ENCODE measurements at regions of chr5 and their contacts with region 1.

Region 1: GRCh38 chr5:67549296-67549618 is 352.7 kb upstream of the CD180 start:
- DNase-seq: no peak
- ATAC-seq: no peak
- H3K4me3 ChIP-seq: no peak overlapping the region
- H3K4me3 Mint-ChIP-seq: no peak overlapping the region
- H3K27ac ChIP-seq: no peak overlapping the region
- H3K27ac Mint-ChIP-seq: no peak overlapping the region
- H3K4me1 ChIP-seq: no peaks in the 10 kb centered on the region
- H3K4me1 Mint-ChIP-seq: peaks cover 9 to 11% of the 10 kb centered on the region in 2 donors
- H3K27me3 ChIP-seq: no peaks in the 10 kb centered on the region
- H3K27me3 Mint-ChIP-seq: no peaks in the 10 kb centered on the region
- CTCF ChIP-seq: no peak

Region 2: DNA sequence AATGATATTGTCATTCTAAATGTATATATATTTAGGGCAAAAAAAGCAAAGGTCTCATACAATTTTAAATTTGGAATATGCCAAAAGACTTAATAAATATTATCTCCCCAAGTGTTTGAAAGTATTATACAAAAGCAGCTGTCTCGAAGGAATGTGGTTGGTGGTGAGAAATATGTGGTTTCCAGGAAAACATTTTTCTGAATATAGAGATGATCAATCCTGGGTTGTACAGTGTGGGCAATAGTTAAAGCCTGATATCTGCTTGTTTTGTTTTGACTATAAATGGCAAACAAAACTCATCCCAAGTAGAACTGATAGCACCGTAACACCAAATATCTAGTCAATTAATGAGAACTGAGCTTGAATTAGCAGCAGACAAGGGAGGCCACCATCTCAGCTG is 39.1 kb after region 1 on chr5:
- intact Hi-C with region 1: loop called (anchors 5 kb)
- DNase-seq: no peak
- ATAC-seq: no peak
- H3K4me3 ChIP-seq: no peak overlapping the region
- H3K4me3 Mint-ChIP-seq: no peak overlapping the region
- H3K27ac ChIP-seq: no peak overlapping the region
- H3K27ac Mint-ChIP-seq: no peak overlapping the region
- H3K4me1 ChIP-seq: no peaks in the 10 kb centered on the region
- H3K4me1 Mint-ChIP-seq: peaks cover 5 to 12% of the 10 kb centered on the region in 2 donors
- H3K27me3 ChIP-seq: no peaks in the 10 kb centered on the region
- H3K27me3 Mint-ChIP-seq: peaks cover 0 to 2% of the 10 kb centered on the region in 2 donors
- CTCF ChIP-seq: no peak

Region 3: DNA sequence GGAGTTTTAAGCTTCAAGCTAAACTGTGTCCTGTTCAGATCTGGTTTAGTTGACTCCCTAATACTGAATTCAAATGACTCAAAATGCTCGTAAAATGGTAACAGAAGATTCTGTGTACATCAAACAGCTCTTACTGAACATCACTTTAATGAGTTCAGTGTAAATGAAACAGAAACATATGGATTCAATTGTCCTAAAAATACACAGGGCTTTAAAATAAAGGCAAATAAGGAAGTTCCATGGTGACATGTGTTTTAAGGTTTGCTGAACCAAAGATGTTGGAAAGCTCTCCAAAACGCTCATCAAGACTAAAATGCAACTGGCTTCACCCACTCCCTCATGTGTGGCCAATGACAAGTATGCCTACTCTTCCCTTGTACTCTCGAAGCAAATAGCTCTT is 326.3 kb after region 1 on chr5:
- intact Hi-C with region 1: no loop called
- DNase-seq: no peak
- ATAC-seq: no peak
- H3K4me3 ChIP-seq: no peak overlapping the region
- H3K4me3 Mint-ChIP-seq: no peak overlapping the region
- H3K27ac ChIP-seq: no peak overlapping the region
- H3K27ac Mint-ChIP-seq: no peak overlapping the region
- H3K4me1 ChIP-seq: no peaks in the 10 kb centered on the region
- H3K4me1 Mint-ChIP-seq: no peaks in the 10 kb centered on the region
- H3K27me3 ChIP-seq: no peaks in the 10 kb centered on the region
- H3K27me3 Mint-ChIP-seq: peaks cover 0 to 5% of the 10 kb centered on the region in 2 donors
- CTCF ChIP-seq: no peak

Region 4: DNA sequence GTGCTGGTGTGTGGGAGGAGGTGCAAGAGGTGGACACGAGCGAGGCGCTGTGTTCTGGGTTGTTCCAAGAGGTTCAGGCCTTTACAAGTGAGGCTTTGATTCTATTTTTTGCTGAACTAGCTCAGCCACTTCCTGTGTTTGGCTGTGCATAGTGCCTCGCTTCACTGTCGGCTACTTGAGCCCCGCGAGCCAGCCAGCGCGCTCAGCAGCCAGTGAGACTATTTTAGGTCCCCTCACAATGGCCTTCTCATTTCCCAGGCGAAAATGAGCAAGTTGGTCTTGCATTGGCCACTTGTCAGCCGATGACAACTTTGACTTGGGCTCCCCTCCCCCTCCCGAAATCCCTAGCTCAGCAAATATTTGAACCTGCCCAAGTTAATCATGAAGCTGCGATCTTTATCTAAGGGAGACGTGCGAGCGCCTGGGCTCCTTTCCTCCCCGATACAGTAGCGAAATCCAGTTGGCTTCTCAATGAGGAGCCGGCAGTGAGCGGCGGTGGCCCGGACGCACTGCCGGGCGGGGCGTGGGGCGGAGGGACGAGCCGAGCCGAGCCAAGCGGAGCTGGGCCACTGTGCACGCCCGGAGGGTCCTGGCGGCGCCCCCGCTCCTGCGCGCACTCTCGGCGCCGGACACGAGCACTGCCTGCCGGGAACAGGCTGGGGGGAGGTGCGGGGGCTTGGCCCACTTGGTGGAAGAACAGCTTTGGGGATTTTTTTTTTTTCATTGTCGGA is 738.9 kb after region 1 on chr5:
- intact Hi-C with region 1: no loop called
- DNase-seq: peak; percentile 53 to 72
- ATAC-seq: peak; percentile 77 to 86 (median 82)
- H3K4me3 ChIP-seq: peak overlapping the region; percentile 62
- H3K4me3 Mint-ChIP-seq: peak overlapping the region; percentile 92
- H3K27ac ChIP-seq: peak overlapping the region; percentile 88
- H3K27ac Mint-ChIP-seq: peak overlapping the region; percentile 92
- H3K4me1 ChIP-seq: peaks cover 31% of the 10 kb centered on the region
- H3K4me1 Mint-ChIP-seq: peaks cover 83 to 88% of the 10 kb centered on the region in 2 donors
- H3K27me3 ChIP-seq: no peaks in the 10 kb centered on the region
- H3K27me3 Mint-ChIP-seq: no peaks in the 10 kb centered on the region
- CTCF ChIP-seq: no peak